Mammary epithelial cell (primary cell): ENCODE measurements at regions of chr1 and their contacts with region 1.

Region 1: GRCh38 chr1:33094971-33095604 is 14.1 kb downstream of the AZIN2 start:
- DNase-seq: peak; percentile 48
- H3K4me3 ChIP-seq: no peak overlapping the region
- H3K27ac ChIP-seq: no peak overlapping the region
- H3K4me1 ChIP-seq: peaks cover 31% of the 10 kb centered on the region
- H3K27me3 ChIP-seq: no peaks in the 10 kb centered on the region
- CTCF ChIP-seq: peak; percentile 98 to 99

Region 2: DNA sequence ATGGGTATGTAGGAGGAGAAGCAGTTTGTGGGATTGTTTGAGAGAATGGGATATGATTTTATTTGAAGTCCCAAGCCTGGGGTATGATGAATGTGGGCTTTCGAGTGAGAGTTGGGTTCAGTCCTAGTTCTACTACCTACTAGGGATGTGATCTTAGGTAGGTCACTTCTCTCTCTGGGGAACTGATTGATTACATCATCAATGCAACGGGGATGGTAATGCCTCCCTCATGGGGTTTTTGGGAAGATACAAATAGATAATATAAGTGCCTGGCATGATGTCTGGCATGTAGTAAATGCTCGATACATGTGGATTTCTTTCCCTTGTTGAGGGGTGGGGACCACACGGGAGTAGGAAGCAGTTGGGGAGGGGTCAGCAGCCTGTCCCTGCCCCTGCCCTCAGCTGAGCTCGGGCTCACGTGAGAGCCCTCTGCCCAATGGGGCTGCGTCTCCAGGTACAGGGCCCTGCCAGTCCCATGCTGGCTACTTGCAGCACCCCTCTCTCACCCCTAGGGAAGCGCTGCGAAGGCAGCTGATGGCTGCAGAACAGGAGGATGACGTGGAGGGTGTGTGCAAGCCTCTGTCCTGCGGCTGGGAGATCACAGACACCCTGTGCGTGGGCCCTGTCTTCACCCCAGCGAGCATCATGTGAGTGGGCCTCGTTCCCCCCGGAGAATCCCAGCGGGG is 24.6 kb after region 1 on chr1:
- CTCF ChIA-PET with region 1: no interaction called
- dilution Hi-C with region 1: no loop called
- in situ Hi-C with region 1: no loop called
- intact Hi-C with region 1: loop called (anchors 1 kb)
- DNase-seq: no peak
- H3K4me3 ChIP-seq: no peak overlapping the region
- H3K27ac ChIP-seq: no peak overlapping the region
- H3K4me1 ChIP-seq: peaks cover 12% of the 10 kb centered on the region
- H3K27me3 ChIP-seq: no peaks in the 10 kb centered on the region
- CTCF ChIP-seq: no peak

Region 3: DNA sequence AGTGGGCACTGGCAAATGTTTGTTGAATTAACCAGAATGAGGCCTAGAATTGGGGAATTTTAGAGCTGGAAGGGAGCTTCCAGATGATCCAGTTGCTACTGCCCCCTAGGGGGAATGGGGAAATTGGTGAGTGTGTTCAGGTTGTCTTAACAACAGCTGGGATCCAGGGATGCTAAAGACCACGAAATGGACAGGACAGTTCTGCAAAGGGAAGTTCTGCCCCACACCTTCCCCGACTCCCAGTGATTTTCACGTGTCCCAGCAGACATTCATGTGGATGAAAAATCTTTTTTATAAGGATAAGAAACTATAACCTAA is 52.9 kb after region 1 on chr1:
- CTCF ChIA-PET with region 1: no interaction called
- dilution Hi-C with region 1: no loop called
- in situ Hi-C with region 1: no loop called
- intact Hi-C with region 1: loop called (anchors 2 kb)
- DNase-seq: no peak
- H3K4me3 ChIP-seq: no peak overlapping the region
- H3K27ac ChIP-seq: no peak overlapping the region
- H3K4me1 ChIP-seq: peaks cover 13% of the 10 kb centered on the region
- H3K27me3 ChIP-seq: no peaks in the 10 kb centered on the region
- CTCF ChIP-seq: peak; percentile 46

Region 4: DNA sequence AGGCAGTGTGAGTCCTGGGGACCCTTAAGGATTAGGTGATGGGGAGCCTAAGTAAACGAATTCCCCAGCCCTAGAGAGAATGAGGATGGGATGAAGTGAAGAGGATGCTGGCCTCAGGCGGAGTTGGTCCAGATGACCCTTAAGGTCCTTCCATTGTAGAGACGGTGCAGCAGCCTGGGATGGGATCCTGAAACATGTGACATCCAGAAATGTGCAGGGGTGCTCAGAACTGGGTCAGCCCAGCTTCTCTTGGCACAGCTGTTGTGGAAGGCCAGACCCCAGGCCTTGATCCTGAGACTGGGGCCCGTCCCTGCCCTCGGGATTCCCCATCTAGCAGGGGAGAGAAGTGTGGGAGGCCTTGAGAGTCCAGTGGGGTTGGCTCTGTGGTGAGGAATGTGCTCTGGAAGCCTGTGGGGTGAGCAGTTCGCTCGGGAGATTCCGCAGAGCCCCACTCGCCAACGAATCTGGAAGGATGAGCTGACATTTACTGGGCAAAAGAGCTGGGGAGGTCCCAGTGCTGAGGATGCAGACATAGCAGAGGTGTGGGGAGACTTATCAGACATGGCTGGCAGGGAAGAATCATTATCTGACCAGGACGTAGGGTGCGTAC is 197.7 kb after region 1 on chr1:
- CTCF ChIA-PET with region 1: no interaction called
- dilution Hi-C with region 1: no loop called
- in situ Hi-C with region 1: no loop called
- intact Hi-C with region 1: no loop called
- DNase-seq: no peak
- H3K4me3 ChIP-seq: no peak overlapping the region
- H3K27ac ChIP-seq: no peak overlapping the region
- H3K4me1 ChIP-seq: no peaks in the 10 kb centered on the region
- H3K27me3 ChIP-seq: no peaks in the 10 kb centered on the region
- CTCF ChIP-seq: no peak

Region 5: GRCh38 chr1:33384040-33384812 is 289.1 kb after region 1 on chr1:
- CTCF ChIA-PET with region 1: no interaction called
- dilution Hi-C with region 1: no loop called
- in situ Hi-C with region 1: no loop called
- intact Hi-C with region 1: no loop called
- DNase-seq: peak; percentile 59
- H3K4me3 ChIP-seq: no peak overlapping the region
- H3K27ac ChIP-seq: no peak overlapping the region
- H3K4me1 ChIP-seq: peaks cover 27% of the 10 kb centered on the region
- H3K27me3 ChIP-seq: no peaks in the 10 kb centered on the region
- CTCF ChIP-seq: no peak

Region 6: DNA sequence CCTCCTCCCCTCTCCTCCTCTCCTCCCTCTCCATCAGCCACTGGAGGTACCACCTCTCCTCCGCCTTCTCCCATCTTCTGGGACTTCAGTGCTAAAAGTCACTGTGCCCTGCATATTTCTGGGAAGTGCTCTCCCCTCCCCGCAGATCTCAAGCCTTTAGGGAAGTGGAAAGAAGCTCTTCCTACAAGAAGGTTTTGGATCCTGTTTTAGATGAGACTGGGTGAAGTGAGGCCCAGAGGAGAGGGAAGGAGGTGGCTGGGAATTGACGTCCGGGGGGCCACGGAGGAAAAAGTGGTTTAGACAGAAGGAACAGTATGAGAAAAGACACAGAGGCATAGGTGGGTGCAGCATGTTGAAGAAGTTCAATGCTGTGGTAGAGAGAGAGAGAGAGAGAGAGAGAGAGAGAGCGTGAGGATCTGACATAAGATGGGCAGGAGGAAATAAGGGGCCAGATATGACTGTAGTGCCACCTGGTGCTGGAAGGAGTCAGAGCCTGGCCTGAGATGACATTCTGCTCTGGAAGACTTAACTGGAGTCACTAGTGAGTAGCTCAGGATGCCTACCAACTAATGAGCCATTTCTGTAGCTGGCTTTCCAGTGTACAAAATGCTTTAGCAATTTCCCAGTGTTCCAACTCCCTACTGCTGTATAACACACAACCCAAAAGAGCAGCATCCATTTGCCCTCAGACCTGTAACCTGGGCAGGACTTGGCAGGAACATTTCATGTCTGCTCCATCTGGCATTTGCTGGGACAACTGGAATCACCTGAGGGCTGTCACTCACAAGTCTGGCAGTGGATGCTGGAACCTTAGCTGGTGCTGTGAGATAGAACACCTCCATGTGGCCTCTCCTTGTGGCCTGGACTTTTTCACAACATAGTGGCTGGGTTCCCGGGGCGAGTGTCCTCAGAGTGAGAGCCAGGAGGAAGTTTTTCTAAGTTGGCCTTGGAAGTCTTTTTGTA is 360.7 kb after region 1 on chr1:
- CTCF ChIA-PET with region 1: no interaction called
- dilution Hi-C with region 1: no loop called
- in situ Hi-C with region 1: no loop called
- intact Hi-C with region 1: loop called (anchors 5 kb)
- DNase-seq: peak; percentile 74
- H3K4me3 ChIP-seq: no peak overlapping the region
- H3K27ac ChIP-seq: no peak overlapping the region
- H3K4me1 ChIP-seq: peaks cover 36% of the 10 kb centered on the region
- H3K27me3 ChIP-seq: no peaks in the 10 kb centered on the region
- CTCF ChIP-seq: peak; percentile 91 to 92

Region 7: GRCh38 chr1:33610864-33611455 is 515.9 kb after region 1 on chr1:
- CTCF ChIA-PET with region 1: no interaction called
- dilution Hi-C with region 1: no loop called
- in situ Hi-C with region 1: no loop called
- intact Hi-C with region 1: loop called (anchors 5 kb)
- DNase-seq: no peak
- H3K4me3 ChIP-seq: no peak overlapping the region
- H3K27ac ChIP-seq: no peak overlapping the region
- H3K4me1 ChIP-seq: no peaks in the 10 kb centered on the region
- H3K27me3 ChIP-seq: no peaks in the 10 kb centered on the region
- CTCF ChIP-seq: no peak